CD4-positive, alpha-beta T cell (primary cell): ENCODE measurements at regions of chrX and their contacts with region 1.

Region 1: DNA sequence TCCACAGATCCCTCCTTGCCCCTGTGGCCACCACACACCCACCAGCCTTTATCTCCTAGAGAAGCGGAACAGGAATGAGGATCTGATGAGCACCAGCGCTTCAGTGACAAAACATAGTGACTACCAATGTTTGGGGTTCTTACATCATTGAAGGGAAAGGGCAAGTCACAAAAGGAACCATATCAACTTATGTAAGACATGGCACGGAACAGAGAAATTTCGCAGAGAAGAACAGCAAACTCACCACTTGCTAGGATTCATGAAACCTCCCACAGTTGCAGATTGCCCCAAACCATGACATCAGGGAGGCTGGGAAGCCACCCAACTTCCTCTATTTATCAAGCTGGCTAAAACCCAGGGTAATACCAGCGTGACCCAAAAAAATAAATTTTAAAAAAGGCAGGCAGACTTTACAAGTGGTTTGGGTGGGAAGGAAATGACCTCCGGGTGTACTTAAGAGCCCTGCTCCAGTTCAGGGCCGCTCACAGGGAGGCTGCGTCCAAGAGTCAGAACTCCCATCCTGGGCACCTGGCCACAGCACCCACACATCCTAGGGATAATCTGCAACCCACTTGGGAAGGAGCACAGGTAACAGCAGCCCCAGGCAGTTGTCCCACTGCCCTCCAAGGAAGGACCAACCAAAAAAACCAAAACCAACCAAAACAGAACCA is 36.0 kb downstream of the ADGRG2 start:
- DNase-seq: peak in 2 of 14 experiments; percentile 5 to 11
- ATAC-seq: no peak
- H3K4me3 ChIP-seq: no peak overlapping the region
- H3K4me3 Mint-ChIP-seq: no peak overlapping the region
- H3K27ac ChIP-seq: no peak overlapping the region
- H3K27ac Mint-ChIP-seq: no peak overlapping the region
- H3K4me1 ChIP-seq: no peaks in the 10 kb centered on the region
- H3K4me1 Mint-ChIP-seq: no peaks in the 10 kb centered on the region
- H3K27me3 ChIP-seq: peaks cover 0 to 2% of the 10 kb centered on the region in 2 experiments
- H3K27me3 Mint-ChIP-seq: no peaks in the 10 kb centered on the region
- CTCF ChIP-seq: no peak

Region 2: DNA sequence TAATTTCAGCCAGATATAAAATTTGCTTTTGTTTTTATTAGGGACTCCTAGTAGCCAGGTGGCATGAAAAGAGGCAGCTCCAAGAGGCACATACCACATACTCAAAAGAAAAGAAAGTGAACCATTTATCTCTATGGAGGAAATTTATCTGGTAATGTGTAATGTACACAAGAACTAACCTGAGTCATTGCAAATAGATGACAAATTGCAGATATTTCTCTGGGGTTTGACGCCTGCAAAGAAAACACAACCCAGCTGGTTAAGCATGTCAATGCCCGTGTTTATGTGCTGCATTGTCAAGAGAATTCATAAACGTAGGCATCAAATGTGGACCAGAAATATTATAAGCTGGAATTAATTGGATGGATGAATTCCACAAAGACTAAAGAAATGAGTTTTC is 55.4 kb before region 1 on chrX:
- CTCF ChIA-PET with region 1: no interaction called
- POLR2A ChIA-PET with region 1: no interaction called
- intact Hi-C with region 1: no loop called
- DNase-seq: no peak
- ATAC-seq: no peak
- H3K4me3 ChIP-seq: no peak overlapping the region
- H3K4me3 Mint-ChIP-seq: no peak overlapping the region
- H3K27ac ChIP-seq: no peak overlapping the region
- H3K27ac Mint-ChIP-seq: no peak overlapping the region
- H3K4me1 ChIP-seq: no peaks in the 10 kb centered on the region
- H3K4me1 Mint-ChIP-seq: no peaks in the 10 kb centered on the region
- H3K27me3 ChIP-seq: no peaks in the 10 kb centered on the region
- H3K27me3 Mint-ChIP-seq: no peaks in the 10 kb centered on the region
- CTCF ChIP-seq: no peak

Region 3: GRCh38 chrX:19070555-19071049 is 15.6 kb before region 1 on chrX:
- CTCF ChIA-PET with region 1: no interaction called
- POLR2A ChIA-PET with region 1: no interaction called
- intact Hi-C with region 1: loop called in 1 of 2 experiments (anchors 1 kb)
- DNase-seq: no peak
- ATAC-seq: no peak
- H3K4me3 ChIP-seq: no peak overlapping the region
- H3K4me3 Mint-ChIP-seq: no peak overlapping the region
- H3K27ac ChIP-seq: no peak overlapping the region
- H3K27ac Mint-ChIP-seq: no peak overlapping the region
- H3K4me1 ChIP-seq: no peaks in the 10 kb centered on the region
- H3K4me1 Mint-ChIP-seq: no peaks in the 10 kb centered on the region
- H3K27me3 ChIP-seq: no peaks in the 10 kb centered on the region
- H3K27me3 Mint-ChIP-seq: no peaks in the 10 kb centered on the region
- CTCF ChIP-seq: no peak